ENCODE measurements at regions of chr6 and their contacts with region 1.

Region 1: DNA sequence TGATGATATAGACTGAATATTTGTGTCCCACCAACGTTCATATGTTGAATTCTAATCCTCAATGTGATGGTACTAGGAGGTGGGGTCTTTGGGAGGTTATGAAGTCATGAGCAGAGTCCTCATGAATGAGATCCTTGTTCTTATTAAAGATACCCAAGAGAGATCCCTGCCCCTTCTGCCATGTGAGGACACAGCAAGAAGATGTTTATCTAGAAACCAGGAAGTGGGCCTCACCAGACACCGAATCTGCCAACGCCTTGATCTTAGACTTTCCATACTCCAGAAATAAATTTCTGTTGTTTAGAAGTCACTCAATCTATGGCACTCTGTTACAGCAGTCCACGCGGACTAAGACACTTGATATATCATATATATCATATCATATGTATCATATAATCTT is 67.7 kb upstream of the GCM1 start:
- DNase-seq: peak; percentile 63
- ATAC-seq: peak; percentile 88
- H3K4me3 ChIP-seq: peak overlapping the region in 1 of 5 experiments; percentile 21
- H3K4me3 Mint-ChIP-seq: peak overlapping the region; percentile 58
- H3K27ac ChIP-seq: peak overlapping the region; percentile 91 to 96
- H3K27ac Mint-ChIP-seq: peak overlapping the region; percentile 94
- H3K4me1 ChIP-seq: peaks cover 71 to 72% of the 10 kb centered on the region in 2 donors
- H3K4me1 Mint-ChIP-seq: peaks cover 66% of the 10 kb centered on the region
- H3K27me3 ChIP-seq: no peaks in the 10 kb centered on the region
- H3K27me3 Mint-ChIP-seq: no peaks in the 10 kb centered on the region
- CTCF ChIP-seq: no peak

Region 2: GRCh38 chr6:53112404-53112803 is 103.9 kb before region 1 on chr6:
- CTCF ChIA-PET with region 1: no interaction called
- POLR2A ChIA-PET with region 1: no interaction called
- intact Hi-C with region 1: no loop called
- DNase-seq: no peak
- ATAC-seq: no peak
- H3K4me3 ChIP-seq: no peak overlapping the region
- H3K4me3 Mint-ChIP-seq: no peak overlapping the region
- H3K27ac ChIP-seq: no peak overlapping the region
- H3K27ac Mint-ChIP-seq: no peak overlapping the region
- H3K4me1 ChIP-seq: no peaks in the 10 kb centered on the region
- H3K4me1 Mint-ChIP-seq: no peaks in the 10 kb centered on the region
- H3K27me3 ChIP-seq: no peaks in the 10 kb centered on the region
- H3K27me3 Mint-ChIP-seq: no peaks in the 10 kb centered on the region
- CTCF ChIP-seq: no peak

Region 3: DNA sequence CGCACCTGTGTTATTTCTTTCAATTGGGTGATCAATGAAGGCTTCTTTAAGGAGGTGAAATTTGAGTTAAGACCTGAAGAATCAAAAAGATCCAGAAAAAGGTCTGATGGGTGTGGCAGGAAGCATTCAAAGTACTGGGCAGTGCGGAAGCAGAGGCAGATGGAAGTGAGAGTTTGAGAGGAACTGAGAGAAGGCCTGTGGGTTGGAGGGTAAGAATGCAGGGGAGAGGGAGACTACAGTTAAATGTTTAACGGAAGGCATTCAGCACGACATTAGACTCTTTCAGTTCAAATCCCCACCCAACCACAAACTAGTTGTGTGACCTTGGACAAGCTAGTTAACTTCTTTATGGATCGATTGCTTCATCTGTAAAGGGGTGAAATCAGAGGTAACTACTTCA is 17.1 kb before region 1 on chr6:
- CTCF ChIA-PET with region 1: interaction called, 5 read pairs
- POLR2A ChIA-PET with region 1: interaction called, 6 read pairs
- intact Hi-C with region 1: loop called (anchors 2 kb)
- DNase-seq: peak; percentile 79
- ATAC-seq: peak; percentile 95
- H3K4me3 ChIP-seq: peak overlapping the region in 1 of 5 experiments; percentile 46
- H3K4me3 Mint-ChIP-seq: peak overlapping the region; percentile 54
- H3K27ac ChIP-seq: peak overlapping the region; percentile 67 to 71
- H3K27ac Mint-ChIP-seq: peak overlapping the region; percentile 75
- H3K4me1 ChIP-seq: peaks cover 73 to 78% of the 10 kb centered on the region in 2 donors
- H3K4me1 Mint-ChIP-seq: peaks cover 65% of the 10 kb centered on the region
- H3K27me3 ChIP-seq: no peaks in the 10 kb centered on the region
- H3K27me3 Mint-ChIP-seq: no peaks in the 10 kb centered on the region
- CTCF ChIP-seq: no peak

Region 4: GRCh38 chr6:53233309-53233708 is 17.0 kb after region 1 on chr6:
- CTCF ChIA-PET with region 1: interaction called, 3 read pairs
- POLR2A ChIA-PET with region 1: interaction called, 3 read pairs
- intact Hi-C with region 1: loop called (anchors 2 kb)
- DNase-seq: no peak
- ATAC-seq: no peak
- H3K4me3 ChIP-seq: no peak overlapping the region
- H3K4me3 Mint-ChIP-seq: no peak overlapping the region
- H3K27ac ChIP-seq: peak overlapping the region in 1 of 2 donors; percentile 1
- H3K27ac Mint-ChIP-seq: peak overlapping the region; percentile 47
- H3K4me1 ChIP-seq: peaks cover 69 to 74% of the 10 kb centered on the region in 2 donors
- H3K4me1 Mint-ChIP-seq: peaks cover 76% of the 10 kb centered on the region
- H3K27me3 ChIP-seq: no peaks in the 10 kb centered on the region
- H3K27me3 Mint-ChIP-seq: no peaks in the 10 kb centered on the region
- CTCF ChIP-seq: no peak

Measured in B cell (primary cell).